ENCODE measurements at regions of chr4 and their contacts with region 1.

Region 1: DNA sequence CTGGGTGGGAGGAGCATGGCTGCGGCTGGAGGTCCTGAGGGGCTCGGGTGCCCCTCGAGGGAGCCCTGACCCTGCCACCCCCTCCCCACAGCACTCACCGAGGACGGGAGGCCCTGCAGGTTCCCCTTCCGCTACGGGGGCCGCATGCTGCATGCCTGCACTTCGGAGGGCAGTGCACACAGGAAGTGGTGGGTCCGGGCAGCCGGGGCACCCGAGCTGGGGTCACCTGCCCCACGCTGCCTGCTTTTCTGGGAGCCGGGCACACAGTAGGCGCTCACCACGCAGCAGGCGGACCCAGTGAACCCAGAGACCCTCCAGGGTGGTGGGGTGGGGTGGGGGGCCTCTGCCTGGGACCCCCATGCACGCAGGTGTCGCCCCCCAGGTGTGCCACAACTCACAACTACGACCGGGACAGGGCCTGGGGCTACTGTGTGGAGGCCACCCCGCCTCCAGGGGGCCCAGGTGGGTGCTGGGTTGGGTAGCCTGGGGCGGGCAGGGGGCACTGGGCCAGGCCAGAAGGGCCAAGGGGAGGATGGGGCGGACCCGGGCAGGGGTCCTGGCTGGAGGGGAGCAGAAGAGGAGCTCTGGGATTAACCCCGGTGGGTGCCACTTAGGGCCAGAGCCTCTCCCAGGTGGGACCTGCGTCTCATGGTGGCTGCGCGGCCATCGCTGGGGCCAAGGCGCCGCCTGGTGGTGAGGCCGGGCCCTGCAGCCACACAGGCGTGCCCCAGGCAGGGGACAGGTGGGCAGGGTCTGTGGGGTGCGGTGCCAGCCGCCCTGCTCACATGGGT is 1.4 kb downstream of the HGFAC start:
- DNase-seq: peak; percentile 71
- ATAC-seq: peak; percentile 94
- H3K4me3 Mint-ChIP-seq: no peak overlapping the region
- H3K27ac Mint-ChIP-seq: no peak overlapping the region
- H3K4me1 Mint-ChIP-seq: no peaks in the 10 kb centered on the region
- H3K27me3 Mint-ChIP-seq: no peaks in the 10 kb centered on the region
- CTCF ChIP-seq: peak; percentile 97

Region 2: DNA sequence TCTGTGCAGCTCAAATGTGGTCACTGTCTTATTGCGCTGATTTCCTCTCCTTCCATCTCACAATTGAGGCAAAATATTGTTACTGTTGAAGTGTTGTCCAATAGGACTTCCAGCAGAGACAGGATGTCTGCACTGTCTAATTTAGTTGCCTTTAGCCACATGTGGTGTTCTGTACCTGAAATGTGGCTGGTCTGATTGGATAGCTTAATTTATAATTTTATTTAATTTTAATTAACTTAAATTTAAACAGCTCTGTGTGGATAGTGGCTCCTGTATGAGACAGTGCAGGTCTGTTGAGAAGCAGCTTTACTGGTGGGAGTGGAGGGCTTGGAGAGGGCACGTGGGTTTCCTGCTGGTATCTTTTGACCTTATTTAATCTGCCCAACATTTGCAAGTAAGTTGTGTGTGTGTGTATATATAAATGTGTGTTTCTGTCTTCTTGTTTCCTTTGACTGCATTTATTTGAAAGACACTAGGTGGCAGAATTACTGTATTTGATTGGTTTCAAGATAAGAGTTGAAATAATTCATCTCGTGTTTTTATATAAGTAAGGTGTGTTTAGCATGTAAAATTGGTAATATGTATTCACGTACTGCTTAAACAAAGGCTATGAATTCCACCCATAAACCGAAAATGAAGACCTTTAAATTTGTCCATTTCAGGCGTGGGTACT is 249.5 kb before region 1 on chr4:
- CTCF ChIA-PET with region 1: interaction called, 4 read pairs
- POLR2A ChIA-PET with region 1: no interaction called
- intact Hi-C with region 1: loop called (anchors 1 kb)
- DNase-seq: no peak
- ATAC-seq: peak; percentile 31
- H3K4me3 Mint-ChIP-seq: no peak overlapping the region
- H3K27ac Mint-ChIP-seq: no peak overlapping the region
- H3K4me1 Mint-ChIP-seq: peaks cover 54% of the 10 kb centered on the region
- H3K27me3 Mint-ChIP-seq: no peaks in the 10 kb centered on the region
- CTCF ChIP-seq: peak; percentile 40

Region 3: DNA sequence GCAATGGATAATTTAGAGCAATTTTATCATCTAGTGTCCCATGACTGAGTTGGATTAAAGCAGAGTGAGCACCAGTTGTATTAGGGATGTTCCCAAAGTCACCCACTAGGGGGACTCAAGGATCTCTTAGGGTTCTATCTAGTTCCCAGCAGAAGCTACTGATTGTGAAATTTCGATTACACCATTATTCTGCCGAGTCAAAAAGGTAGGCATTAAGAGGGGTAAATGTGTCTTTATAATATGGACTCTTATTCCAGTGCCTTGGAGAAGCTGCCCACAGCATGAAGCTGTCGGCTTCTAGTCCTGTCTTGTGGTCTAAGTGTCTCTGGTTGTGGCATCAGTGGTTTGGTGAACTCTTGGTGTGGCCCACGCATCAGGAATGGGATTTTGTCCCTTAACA is 97.0 kb before region 1 on chr4:
- CTCF ChIA-PET with region 1: interaction called, 35 read pairs
- POLR2A ChIA-PET with region 1: no interaction called
- intact Hi-C with region 1: loop called (anchors 5 kb)
- DNase-seq: peak; percentile 57
- ATAC-seq: peak; percentile 85
- H3K4me3 Mint-ChIP-seq: no peak overlapping the region
- H3K27ac Mint-ChIP-seq: no peak overlapping the region
- H3K4me1 Mint-ChIP-seq: peaks cover 21% of the 10 kb centered on the region
- H3K27me3 Mint-ChIP-seq: no peaks in the 10 kb centered on the region
- CTCF ChIP-seq: peak; percentile 79